ENCODE measurements at regions of chr17 and their contacts with region 1.

Region 1: DNA sequence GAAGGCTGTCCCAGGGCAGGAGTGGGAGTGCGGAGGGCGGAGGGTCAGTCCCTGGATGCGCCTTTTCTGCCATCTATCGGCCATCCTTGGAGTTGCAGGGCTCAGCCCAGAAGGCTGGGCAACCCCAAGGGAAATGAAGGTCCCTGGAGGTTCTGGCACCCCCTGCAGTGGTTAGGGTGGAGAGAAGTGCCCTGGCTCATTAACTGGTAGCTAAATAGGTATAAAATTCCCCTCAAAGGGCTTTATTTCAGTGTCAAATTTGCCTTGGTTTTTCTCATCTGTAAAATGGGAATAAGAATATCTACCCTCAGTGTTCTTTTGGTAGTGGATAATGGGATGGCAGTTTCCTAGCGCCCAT is 22.4 kb downstream of the C17orf75 start:
- DNase-seq: peak; percentile 86
- ATAC-seq: peak; percentile 95
- H3K4me3 Mint-ChIP-seq: peak overlapping the region; percentile 61
- H3K27ac Mint-ChIP-seq: no peak overlapping the region
- H3K4me1 Mint-ChIP-seq: peaks cover 17% of the 10 kb centered on the region
- H3K27me3 Mint-ChIP-seq: peaks cover 12% of the 10 kb centered on the region
- CTCF ChIP-seq: peak; percentile 97

Region 2: DNA sequence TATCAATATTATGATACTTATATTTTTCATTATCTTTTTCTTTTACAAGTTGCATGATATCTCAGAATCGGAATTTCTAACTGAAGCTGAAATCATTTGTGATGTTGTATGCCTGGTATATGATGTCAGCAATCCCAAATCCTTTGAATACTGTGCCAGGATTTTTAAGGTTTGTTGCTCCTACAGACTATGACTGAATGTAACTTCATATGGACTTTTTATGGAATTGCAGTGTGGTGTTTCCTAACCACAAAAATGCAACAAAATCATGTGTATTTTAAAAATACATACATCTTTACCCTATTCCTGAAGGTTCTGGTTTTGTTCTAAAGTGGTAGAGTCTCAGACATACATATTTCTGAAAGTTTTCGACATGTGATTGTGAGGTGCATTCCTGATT is 112.7 kb before region 1 on chr17:
- CTCF ChIA-PET with region 1: interaction called, 11 read pairs
- POLR2A ChIA-PET with region 1: no interaction called
- intact Hi-C with region 1: no loop called
- DNase-seq: no peak
- ATAC-seq: no peak
- H3K4me3 Mint-ChIP-seq: no peak overlapping the region
- H3K27ac Mint-ChIP-seq: no peak overlapping the region
- H3K4me1 Mint-ChIP-seq: no peaks in the 10 kb centered on the region
- H3K27me3 Mint-ChIP-seq: no peaks in the 10 kb centered on the region
- CTCF ChIP-seq: no peak

Region 3: GRCh38 chr17:32241640-32242039 is 77.9 kb before region 1 on chr17:
- CTCF ChIA-PET with region 1: interaction called, 11 read pairs
- POLR2A ChIA-PET with region 1: no interaction called
- intact Hi-C with region 1: no loop called
- DNase-seq: no peak
- ATAC-seq: no peak
- H3K4me3 Mint-ChIP-seq: no peak overlapping the region
- H3K27ac Mint-ChIP-seq: no peak overlapping the region
- H3K4me1 Mint-ChIP-seq: no peaks in the 10 kb centered on the region
- H3K27me3 Mint-ChIP-seq: no peaks in the 10 kb centered on the region
- CTCF ChIP-seq: no peak

Region 4: DNA sequence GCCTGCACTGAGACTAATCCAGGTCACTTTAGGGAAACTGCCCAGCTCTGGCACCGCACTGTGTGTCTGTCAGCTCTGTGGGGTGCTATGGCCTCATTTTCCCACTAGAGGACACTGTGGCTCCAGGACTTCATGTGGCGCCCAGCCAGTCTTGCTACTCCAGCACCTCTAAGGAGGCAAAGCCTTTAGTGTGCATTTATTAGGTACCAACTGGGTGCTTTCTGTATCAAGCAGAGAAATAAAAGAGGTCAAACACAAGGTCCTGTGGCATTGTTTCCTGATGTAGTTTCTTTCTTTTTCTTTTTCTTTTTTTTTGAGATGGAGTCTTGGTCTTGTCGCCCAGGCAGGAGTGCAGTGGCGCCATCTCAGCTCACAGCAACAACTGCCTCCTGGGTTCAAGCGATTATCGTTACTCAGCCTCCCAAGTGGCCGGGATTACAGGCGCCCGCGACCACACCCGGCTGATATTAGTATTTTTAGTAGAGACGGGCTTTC is 66.4 kb before region 1 on chr17:
- CTCF ChIA-PET with region 1: interaction called, 15 read pairs
- POLR2A ChIA-PET with region 1: no interaction called
- intact Hi-C with region 1: loop called (anchors 1 kb)
- DNase-seq: peak; percentile 89
- ATAC-seq: peak; percentile 100
- H3K4me3 Mint-ChIP-seq: no peak overlapping the region
- H3K27ac Mint-ChIP-seq: no peak overlapping the region
- H3K4me1 Mint-ChIP-seq: no peaks in the 10 kb centered on the region
- H3K27me3 Mint-ChIP-seq: peaks cover 2% of the 10 kb centered on the region
- CTCF ChIP-seq: peak; percentile 98

Region 5: GRCh38 chr17:32298298-32298697 is 21.2 kb before region 1 on chr17:
- CTCF ChIA-PET with region 1: no interaction called
- POLR2A ChIA-PET with region 1: no interaction called
- intact Hi-C with region 1: no loop called
- DNase-seq: no peak
- ATAC-seq: no peak
- H3K4me3 Mint-ChIP-seq: no peak overlapping the region
- H3K27ac Mint-ChIP-seq: no peak overlapping the region
- H3K4me1 Mint-ChIP-seq: no peaks in the 10 kb centered on the region
- H3K27me3 Mint-ChIP-seq: no peaks in the 10 kb centered on the region
- CTCF ChIP-seq: no peak

Region 6: GRCh38 chr17:32333187-32333586 is 13.7 kb after region 1 on chr17:
- CTCF ChIA-PET with region 1: interaction called, 11 read pairs
- POLR2A ChIA-PET with region 1: interaction called, 3 read pairs
- intact Hi-C with region 1: no loop called
- DNase-seq: no peak
- ATAC-seq: no peak
- H3K4me3 Mint-ChIP-seq: no peak overlapping the region
- H3K27ac Mint-ChIP-seq: no peak overlapping the region
- H3K4me1 Mint-ChIP-seq: peaks cover 24% of the 10 kb centered on the region
- H3K27me3 Mint-ChIP-seq: no peaks in the 10 kb centered on the region
- CTCF ChIP-seq: no peak

Region 7: DNA sequence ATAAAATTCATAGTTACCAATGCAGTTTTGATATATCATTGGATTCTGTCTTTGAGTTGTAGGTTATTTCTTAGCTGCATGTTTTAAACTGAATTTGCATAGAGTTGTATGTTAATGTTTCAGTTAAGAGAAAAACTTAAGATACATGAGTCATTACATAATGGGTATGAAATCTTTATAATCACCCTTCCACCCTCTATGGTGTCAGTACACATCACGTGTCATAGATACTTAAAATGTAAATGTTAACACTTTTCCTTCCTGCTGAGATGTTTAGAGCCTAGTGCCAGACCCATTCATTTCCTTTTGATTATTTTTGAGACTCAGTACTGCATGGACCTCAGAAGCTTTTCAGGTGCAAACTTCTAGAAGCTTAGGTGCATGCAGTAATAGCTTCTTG is 50.9 kb after region 1 on chr17:
- CTCF ChIA-PET with region 1: no interaction called
- POLR2A ChIA-PET with region 1: no interaction called
- intact Hi-C with region 1: no loop called
- DNase-seq: no peak
- ATAC-seq: peak; percentile 39
- H3K4me3 Mint-ChIP-seq: no peak overlapping the region
- H3K27ac Mint-ChIP-seq: peak overlapping the region; percentile 14
- H3K4me1 Mint-ChIP-seq: peaks cover 42% of the 10 kb centered on the region
- H3K27me3 Mint-ChIP-seq: no peaks in the 10 kb centered on the region
- CTCF ChIP-seq: no peak

Measured in activated CD8-positive, alpha-beta T cell treated with anti-CD3 and anti-CD28 coated beads for 36 hours (primary cell).